Pancreas (tissue), 10 donors: ENCODE measurements at regions of chr1 and their contacts with region 1.

Region 1: GRCh38 chr1:108897865-108898720 is 21.3 kb downstream of the GPSM2 start:
- DNase-seq: peak in 2 of 6 donors; percentile 17 to 31
- ATAC-seq: peak; percentile 58 to 91 (median 84)
- H3K4me3 ChIP-seq: no peak overlapping the region
- H3K27ac ChIP-seq: no peak overlapping the region
- H3K4me1 ChIP-seq: no peaks in the 10 kb centered on the region
- H3K27me3 ChIP-seq: no peaks in the 10 kb centered on the region
- CTCF ChIP-seq: peak; percentile 17 to 58 (median 52)

Region 2: DNA sequence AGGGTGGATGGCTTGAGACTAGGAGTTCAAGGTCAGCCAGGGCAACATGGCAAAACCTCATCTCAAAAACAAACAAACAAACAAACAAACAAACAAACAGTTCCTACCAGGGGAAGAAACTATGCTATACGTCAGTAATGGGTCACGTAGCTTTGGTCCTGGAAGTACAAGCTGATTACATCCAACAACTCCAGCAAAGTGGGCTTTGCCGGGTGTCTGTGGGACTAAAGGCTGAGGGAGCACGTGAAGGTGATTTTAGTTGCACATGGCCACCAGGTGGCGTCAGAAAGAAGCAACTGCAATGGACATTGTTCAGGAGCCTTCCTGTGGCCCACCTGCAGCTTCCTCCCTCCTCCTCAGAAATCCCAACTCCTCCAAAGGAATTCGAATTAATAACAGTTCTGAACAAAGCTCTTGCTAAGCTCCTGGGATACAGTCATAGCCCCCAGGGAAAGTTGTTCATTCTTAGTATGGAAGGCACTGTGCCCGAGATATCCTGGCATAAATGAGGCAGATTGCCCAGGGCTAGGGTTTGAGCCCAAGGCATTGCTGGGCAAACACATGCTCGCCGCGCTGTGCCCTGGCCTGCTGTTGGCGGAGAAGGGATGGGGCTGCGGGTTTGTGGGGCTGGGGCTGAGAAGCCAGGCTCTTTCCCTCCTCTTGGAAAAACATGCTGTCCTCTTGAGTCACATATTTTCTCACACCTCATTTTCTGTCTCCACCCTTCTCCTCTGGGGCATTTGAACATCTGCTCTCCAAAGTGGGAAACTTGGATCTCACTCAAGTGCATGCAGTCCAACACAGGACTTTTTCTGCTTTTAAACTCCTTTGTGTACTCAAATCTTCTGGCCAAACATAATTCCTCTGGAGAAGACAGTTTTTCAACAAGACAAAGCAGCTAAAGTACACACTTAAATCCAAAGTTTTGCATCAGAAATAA is 69.8 kb before region 1 on chr1:
- intact Hi-C with region 1: loop called in 2 of 3 experiments (anchors 5 to 10 kb)
- DNase-seq: peak; percentile 56 to 81 (median 70)
- ATAC-seq: peak; percentile 77 to 86 (median 83)
- H3K4me3 ChIP-seq: no peak overlapping the region
- H3K27ac ChIP-seq: no peak overlapping the region
- H3K4me1 ChIP-seq: no peaks in the 10 kb centered on the region
- H3K27me3 ChIP-seq: no peaks in the 10 kb centered on the region
- CTCF ChIP-seq: peak; percentile 49 to 72 (median 66)